CD4-positive, alpha-beta T cell (primary cell): ENCODE measurements at regions of chr12 and their contacts with region 1.

Region 1: GRCh38 chr12:57583008-57583831 is 7.8 kb upstream of the PIP4K2C start:
- DNase-seq: peak; percentile 33 to 89 (median 56)
- ATAC-seq: peak; percentile 100
- H3K4me3 ChIP-seq: no peak overlapping the region
- H3K4me3 Mint-ChIP-seq: no peak overlapping the region
- H3K27ac ChIP-seq: no peak overlapping the region
- H3K27ac Mint-ChIP-seq: no peak overlapping the region
- H3K4me1 ChIP-seq: peaks cover 8% of the 10 kb centered on the region
- H3K4me1 Mint-ChIP-seq: no peaks in the 10 kb centered on the region
- H3K27me3 ChIP-seq: peaks cover 0 to 10% of the 10 kb centered on the region in 2 experiments
- H3K27me3 Mint-ChIP-seq: peaks cover 15% of the 10 kb centered on the region
- CTCF ChIP-seq: peak; percentile 96

Region 2: GRCh38 chr12:57604454-57604991 is 21.3 kb after region 1 on chr12 and contains the start of gene DTX3:
- CTCF ChIA-PET with region 1: interaction called, 15 read pairs
- POLR2A ChIA-PET with region 1: interaction called, 4 read pairs
- intact Hi-C with region 1: no loop called
- DNase-seq: peak in 7 of 14 experiments; percentile 15 to 65 (median 47)
- ATAC-seq: peak; percentile 65
- H3K4me3 ChIP-seq: peak within 1 kb of the TSS; percentile 74
- H3K4me3 Mint-ChIP-seq: peak within 1 kb of the TSS; percentile 92
- H3K27ac ChIP-seq: peak within 1 kb of the TSS; percentile 45 to 52
- H3K27ac Mint-ChIP-seq: peak within 1 kb of the TSS; percentile 81
- H3K4me1 ChIP-seq: peaks cover 25% of the 10 kb centered on the region
- H3K4me1 Mint-ChIP-seq: peaks cover 32% of the 10 kb centered on the region
- H3K27me3 ChIP-seq: no peaks in the 10 kb centered on the region
- H3K27me3 Mint-ChIP-seq: no peaks in the 10 kb centered on the region
- CTCF ChIP-seq: no peak
- total RNA-seq, gene DTX3: 28.6 to 29.4 TPM

Region 3: GRCh38 chr12:57616383-57617101 is 33.3 kb after region 1 on chr12:
- CTCF ChIA-PET with region 1: interaction called, 36 read pairs
- POLR2A ChIA-PET with region 1: interaction called, 7 read pairs
- intact Hi-C with region 1: loop called (anchors 1 kb)
- DNase-seq: no peak
- ATAC-seq: no peak
- H3K4me3 ChIP-seq: no peak overlapping the region
- H3K4me3 Mint-ChIP-seq: peak overlapping the region; percentile 11
- H3K27ac ChIP-seq: no peak overlapping the region
- H3K27ac Mint-ChIP-seq: no peak overlapping the region
- H3K4me1 ChIP-seq: peaks cover 29% of the 10 kb centered on the region
- H3K4me1 Mint-ChIP-seq: peaks cover 32% of the 10 kb centered on the region
- H3K27me3 ChIP-seq: peaks cover 55 to 74% of the 10 kb centered on the region in 2 experiments
- H3K27me3 Mint-ChIP-seq: peaks cover 96% of the 10 kb centered on the region
- CTCF ChIP-seq: no peak

Region 4: DNA sequence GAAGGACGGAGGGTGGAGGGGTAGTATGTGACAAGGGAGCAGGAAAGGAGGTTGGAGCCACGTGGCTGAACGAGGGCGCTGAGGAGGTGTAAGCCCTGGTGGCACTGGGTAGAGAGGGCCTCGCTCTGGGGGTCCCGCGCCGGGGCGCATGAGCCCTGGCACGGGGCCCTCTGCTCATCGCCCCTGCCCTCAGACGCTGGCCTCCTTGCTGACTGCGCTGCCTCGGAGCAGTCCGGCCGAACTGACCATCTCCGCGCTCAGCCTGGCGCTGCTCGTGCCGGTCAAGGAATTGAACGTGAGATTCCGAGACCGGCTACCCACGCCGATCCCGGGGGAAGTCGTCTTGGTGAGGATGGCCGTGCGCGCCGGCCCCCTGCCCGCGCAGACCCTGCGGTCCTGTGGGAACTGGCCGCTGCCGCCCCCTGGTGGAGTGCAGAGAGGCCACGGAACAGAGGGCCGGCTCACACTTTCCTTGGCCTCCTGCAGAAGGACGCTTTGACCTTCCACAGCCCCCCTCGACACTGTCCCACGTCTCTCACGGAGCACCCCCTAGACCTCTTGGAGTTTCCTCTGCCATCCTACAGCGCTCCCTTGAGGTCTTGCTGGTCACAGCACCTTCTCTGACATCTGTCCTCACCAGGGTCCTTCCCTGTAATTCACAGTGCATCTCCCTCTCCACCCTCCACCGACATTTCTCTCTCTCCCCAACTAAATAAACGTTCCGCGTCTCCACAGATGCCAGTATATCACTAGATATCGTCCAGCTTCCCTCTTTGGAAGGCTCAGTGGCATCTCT is 38.5 kb after region 1 on chr12:
- CTCF ChIA-PET with region 1: interaction called, 36 read pairs
- POLR2A ChIA-PET with region 1: interaction called, 7 read pairs
- intact Hi-C with region 1: loop called (anchors 1 kb)
- DNase-seq: peak; percentile 33 to 77 (median 50)
- ATAC-seq: peak; percentile 66
- H3K4me3 ChIP-seq: peak overlapping the region; percentile 40
- H3K4me3 Mint-ChIP-seq: peak overlapping the region; percentile 80
- H3K27ac ChIP-seq: no peak overlapping the region
- H3K27ac Mint-ChIP-seq: no peak overlapping the region
- H3K4me1 ChIP-seq: peaks cover 33% of the 10 kb centered on the region
- H3K4me1 Mint-ChIP-seq: peaks cover 34% of the 10 kb centered on the region
- H3K27me3 ChIP-seq: peaks cover 89 to 93% of the 10 kb centered on the region in 2 experiments
- H3K27me3 Mint-ChIP-seq: peaks cover 100% of the 10 kb centered on the region
- CTCF ChIP-seq: peak; percentile 96

Region 5: GRCh38 chr12:57632694-57633477 is 49.7 kb after region 1 on chr12 and contains the start of gene B4GALNT1:
- CTCF ChIA-PET with region 1: interaction called, 34 read pairs
- POLR2A ChIA-PET with region 1: interaction called, 5 read pairs
- intact Hi-C with region 1: loop called (anchors 1 to 2 kb)
- DNase-seq: peak; percentile 33 to 84 (median 56)
- ATAC-seq: peak; percentile 93
- H3K4me3 ChIP-seq: peak within 1 kb of the TSS; percentile 56
- H3K4me3 Mint-ChIP-seq: peak within 1 kb of the TSS; percentile 72
- H3K27ac ChIP-seq: no peak within 1 kb of the TSS
- H3K27ac Mint-ChIP-seq: no peak within 1 kb of the TSS
- H3K4me1 ChIP-seq: peaks cover 22% of the 10 kb centered on the region
- H3K4me1 Mint-ChIP-seq: peaks cover 18% of the 10 kb centered on the region
- H3K27me3 ChIP-seq: peaks cover 53 to 61% of the 10 kb centered on the region in 2 experiments
- H3K27me3 Mint-ChIP-seq: peaks cover 67% of the 10 kb centered on the region
- CTCF ChIP-seq: peak; percentile 89
- total RNA-seq, gene B4GALNT1: not detected

Region 6: DNA sequence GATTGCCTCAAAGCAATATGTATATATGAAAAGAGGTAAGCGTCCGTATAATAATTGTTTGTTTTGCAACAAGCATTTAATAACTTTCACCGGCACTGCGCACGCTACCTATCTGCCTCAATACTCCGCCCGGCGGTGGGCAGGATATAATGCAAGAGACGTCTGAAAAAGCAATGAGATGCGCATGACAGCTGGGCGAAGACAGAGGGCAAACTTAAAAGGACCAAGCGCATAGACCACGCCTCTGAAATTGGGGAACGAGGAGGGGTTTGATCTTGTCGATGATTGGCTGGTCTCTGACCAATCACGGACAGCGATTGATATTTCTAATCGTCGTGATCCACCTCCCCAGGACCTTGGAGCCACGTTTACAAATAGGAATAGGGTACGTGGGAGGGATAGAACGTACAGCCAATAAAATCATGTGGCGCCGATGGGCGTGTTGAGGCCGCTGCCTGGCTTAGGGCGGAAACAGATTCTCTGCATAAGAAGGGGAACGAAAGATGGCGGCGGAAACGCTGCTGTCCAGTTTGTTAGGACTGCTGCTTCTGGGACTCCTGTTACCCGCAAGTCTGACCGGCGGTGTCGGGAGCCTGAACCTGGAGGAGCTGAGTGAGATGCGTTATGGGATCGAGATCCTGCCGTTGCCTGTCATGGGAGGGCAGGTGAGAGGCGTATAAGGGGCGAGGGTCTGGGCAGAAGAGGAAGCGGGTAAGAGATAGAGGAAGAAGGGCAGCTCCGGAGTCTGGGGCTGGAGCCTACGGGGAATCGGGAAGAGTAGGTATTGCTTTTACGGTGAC is 110.6 kb after region 1 on chr12 and contains the start of gene OS9:
- CTCF ChIA-PET with region 1: interaction called, 7 read pairs
- POLR2A ChIA-PET with region 1: no interaction called
- intact Hi-C with region 1: loop called in 1 of 2 experiments (anchors 1 kb)
- DNase-seq: peak; percentile 83 to 100 (median 92)
- ATAC-seq: peak; percentile 92
- H3K4me3 ChIP-seq: peak within 1 kb of the TSS; percentile 95
- H3K4me3 Mint-ChIP-seq: no peak within 1 kb of the TSS
- H3K27ac ChIP-seq: peak within 1 kb of the TSS; percentile 59 to 73
- H3K27ac Mint-ChIP-seq: no peak within 1 kb of the TSS
- H3K4me1 ChIP-seq: peaks cover 16% of the 10 kb centered on the region
- H3K4me1 Mint-ChIP-seq: peaks cover 9% of the 10 kb centered on the region
- H3K27me3 ChIP-seq: no peaks in the 10 kb centered on the region
- H3K27me3 Mint-ChIP-seq: peaks cover 11% of the 10 kb centered on the region
- CTCF ChIP-seq: peak; percentile 82
- total RNA-seq, gene OS9: 108 to 112 TPM